ENCODE measurements at regions of chr14 and their contacts with region 1.

Region 1: GRCh38 chr14:77097700-77098528 is at the start of gene CIPC:
- DNase-seq: peak; percentile 100
- H3K4me3 Mint-ChIP-seq: peak within 1 kb of the TSS; percentile 91
- H3K27ac Mint-ChIP-seq: peak within 1 kb of the TSS; percentile 97
- H3K4me1 Mint-ChIP-seq: peaks cover 24% of the 10 kb centered on the region
- H3K27me3 Mint-ChIP-seq: no peaks in the 10 kb centered on the region
- total RNA-seq, gene CIPC: 10.9 and 11.3 TPM in 2 replicates

Region 2: GRCh38 chr14:76151398-76152339 is 946.2 kb before region 1 on chr14 and contains the start of gene GPATCH2L:
- intact Hi-C with region 1: loop called (anchors 5 kb)
- DNase-seq: peak; percentile 94
- H3K4me3 Mint-ChIP-seq: peak within 1 kb of the TSS; percentile 96
- H3K27ac Mint-ChIP-seq: peak within 1 kb of the TSS; percentile 99
- H3K4me1 Mint-ChIP-seq: peaks cover 50% of the 10 kb centered on the region
- H3K27me3 Mint-ChIP-seq: peaks cover 2% of the 10 kb centered on the region
- total RNA-seq, gene GPATCH2L: 59.1 and 67.3 TPM in 2 replicates

Region 3: DNA sequence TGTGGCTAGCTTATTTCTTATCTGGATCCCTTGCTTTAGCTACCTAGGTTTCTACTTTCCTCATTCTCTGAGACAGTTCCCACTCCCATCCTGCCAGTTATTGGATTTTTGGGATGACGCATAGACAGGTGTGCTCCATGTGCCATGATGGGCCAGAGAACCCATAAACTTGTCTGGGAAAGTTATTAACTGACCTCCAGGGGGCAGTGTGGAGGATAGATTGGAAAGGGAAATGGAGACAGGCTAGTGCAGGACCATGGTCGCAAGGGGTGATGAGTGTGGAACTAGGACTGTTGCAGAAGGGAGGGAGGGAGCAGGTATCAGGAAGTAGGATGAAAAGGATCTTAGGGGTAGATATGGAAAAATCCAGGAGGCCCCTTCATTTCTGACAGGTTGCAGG is 641.7 kb before region 1 on chr14:
- intact Hi-C with region 1: loop called (anchors 10 kb)
- DNase-seq: no peak
- H3K4me3 Mint-ChIP-seq: no peak overlapping the region
- H3K27ac Mint-ChIP-seq: no peak overlapping the region
- H3K4me1 Mint-ChIP-seq: no peaks in the 10 kb centered on the region
- H3K27me3 Mint-ChIP-seq: peaks cover 8% of the 10 kb centered on the region

Region 4: GRCh38 chr14:76876076-76876475 is 221.8 kb before region 1 on chr14:
- intact Hi-C with region 1: loop called (anchors 1 kb)
- DNase-seq: peak; percentile 20
- H3K4me3 Mint-ChIP-seq: no peak overlapping the region
- H3K27ac Mint-ChIP-seq: no peak overlapping the region
- H3K4me1 Mint-ChIP-seq: no peaks in the 10 kb centered on the region
- H3K27me3 Mint-ChIP-seq: no peaks in the 10 kb centered on the region

Region 5: DNA sequence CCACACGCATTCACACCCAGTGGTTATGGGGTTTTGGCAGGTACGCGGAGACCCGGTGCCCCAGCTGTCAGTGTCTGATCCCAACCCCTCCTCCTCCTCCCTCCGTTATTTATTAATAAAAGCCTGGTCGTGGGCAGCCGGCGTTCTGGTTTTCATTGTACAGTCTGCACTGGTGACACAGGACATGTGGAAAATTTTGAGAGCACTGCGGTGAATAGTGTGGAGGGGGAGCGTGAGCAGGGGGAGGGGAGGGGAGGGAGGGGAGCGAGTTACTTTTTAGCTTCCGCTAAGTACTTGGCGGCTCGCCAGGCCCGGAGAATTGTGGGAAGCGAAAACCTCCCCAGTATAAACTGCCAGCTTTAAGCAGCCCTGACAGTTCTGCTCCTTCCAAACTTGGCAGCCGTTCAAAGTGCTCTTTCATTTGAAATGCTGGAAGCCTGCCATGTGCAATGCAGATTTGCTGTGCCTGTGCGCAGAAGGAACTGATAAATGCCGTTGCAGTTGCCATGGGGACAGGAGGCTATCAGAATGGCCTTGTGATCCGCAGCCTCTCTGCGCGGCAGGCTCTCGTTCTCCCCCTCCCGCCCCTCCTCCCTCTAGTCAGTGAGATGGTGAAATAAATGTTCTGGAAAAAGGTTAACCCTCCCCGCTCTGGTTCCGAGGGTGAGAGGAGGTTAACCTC is 57.7 kb before region 1 on chr14:
- intact Hi-C with region 1: loop called (anchors 5 kb)
- DNase-seq: peak; percentile 87
- H3K4me3 Mint-ChIP-seq: peak overlapping the region; percentile 76
- H3K27ac Mint-ChIP-seq: peak overlapping the region; percentile 89
- H3K4me1 Mint-ChIP-seq: peaks cover 81% of the 10 kb centered on the region
- H3K27me3 Mint-ChIP-seq: no peaks in the 10 kb centered on the region

Region 6: DNA sequence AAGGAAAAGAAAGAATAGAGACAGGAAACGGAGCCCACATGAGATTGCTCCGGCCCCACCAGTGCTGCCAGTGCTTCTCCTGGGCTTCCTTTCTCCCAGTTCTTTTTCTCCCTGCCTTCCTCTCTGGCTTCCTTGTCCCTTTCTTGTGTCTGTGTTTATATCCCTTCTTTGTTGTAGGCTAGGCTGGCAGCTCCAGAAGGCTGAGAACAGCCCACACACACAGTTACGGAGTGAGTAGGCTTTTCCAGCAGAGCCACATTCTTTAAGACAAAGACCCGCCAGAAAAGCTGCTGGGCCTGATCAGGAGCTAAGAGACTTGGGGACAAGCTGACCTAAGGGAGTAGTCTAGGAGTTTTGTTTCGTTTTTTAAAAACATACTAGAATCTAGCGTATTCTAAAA is 13.1 kb after region 1 on chr14:
- intact Hi-C with region 1: no loop called
- DNase-seq: no peak
- H3K4me3 Mint-ChIP-seq: no peak overlapping the region
- H3K27ac Mint-ChIP-seq: no peak overlapping the region
- H3K4me1 Mint-ChIP-seq: no peaks in the 10 kb centered on the region
- H3K27me3 Mint-ChIP-seq: no peaks in the 10 kb centered on the region

Region 7: GRCh38 chr14:77124345-77125280 is 26.7 kb after region 1 on chr14:
- intact Hi-C with region 1: loop called (anchors 1 kb)
- DNase-seq: peak; percentile 63
- H3K4me3 Mint-ChIP-seq: peak overlapping the region; percentile 74
- H3K27ac Mint-ChIP-seq: no peak overlapping the region
- H3K4me1 Mint-ChIP-seq: peaks cover 8% of the 10 kb centered on the region
- H3K27me3 Mint-ChIP-seq: peaks cover 30% of the 10 kb centered on the region

Region 8: GRCh38 chr14:77388959-77389358 is 291.0 kb after region 1 on chr14:
- intact Hi-C with region 1: no loop called
- DNase-seq: no peak
- H3K4me3 Mint-ChIP-seq: no peak overlapping the region
- H3K27ac Mint-ChIP-seq: no peak overlapping the region
- H3K4me1 Mint-ChIP-seq: no peaks in the 10 kb centered on the region
- H3K27me3 Mint-ChIP-seq: no peaks in the 10 kb centered on the region

Measured in activated T-helper 2 cell treated with anti-CD3 and anti-CD28 coated beads, Interferon-gamma antibody, Interleukin-2, Interleukin-4, amounts not matched to agents 10 μg/mL and 5 μg/mL and 100 μg/mL, durations not matched to agents 14 hours and 24 hours and 36 hours (primary cell).